IMR-90 (cell line): ENCODE measurements at regions of chr11 and their contacts with region 1.

Region 1: GRCh38 chr11:58788355-58789023 is 56.0 kb downstream of the GLYATL2 start:
- DNase-seq: peak; percentile 61
- ATAC-seq: peak; percentile 98
- H3K4me3 ChIP-seq: no peak overlapping the region
- H3K27ac ChIP-seq: no peak overlapping the region
- H3K4me1 ChIP-seq: no peaks in the 10 kb centered on the region
- H3K27me3 ChIP-seq: no peaks in the 10 kb centered on the region; the same call in 1 of the 2 replicates
- CTCF ChIP-seq: peak; percentile 68
- POLR2A ChIP-seq: no peak
- RAD21 ChIP-seq: peak; percentile 62

Region 2: GRCh38 chr11:58654079-58654907 is 134.2 kb before region 1 on chr11:
- CTCF ChIA-PET with region 1: interaction called, 3 read pairs
- POLR2A ChIA-PET with region 1: no interaction called
- dilution Hi-C with region 1: no loop called
- in situ Hi-C with region 1: no loop called
- intact Hi-C with region 1: loop called (anchors 1 kb)
- DNase-seq: peak; percentile 72
- ATAC-seq: peak; percentile 98
- H3K4me3 ChIP-seq: no peak overlapping the region
- H3K27ac ChIP-seq: no peak overlapping the region
- H3K4me1 ChIP-seq: 0 out of 2 replicates have a peak, but pooled peaks cover 2% of the 10 kb centered on the region
- H3K27me3 ChIP-seq: no peaks in the 10 kb centered on the region
- CTCF ChIP-seq: peak; percentile 89
- POLR2A ChIP-seq: no peak
- RAD21 ChIP-seq: peak; percentile 72